ENCODE measurements at regions of chr2 and their contacts with region 1.

Region 1: DNA sequence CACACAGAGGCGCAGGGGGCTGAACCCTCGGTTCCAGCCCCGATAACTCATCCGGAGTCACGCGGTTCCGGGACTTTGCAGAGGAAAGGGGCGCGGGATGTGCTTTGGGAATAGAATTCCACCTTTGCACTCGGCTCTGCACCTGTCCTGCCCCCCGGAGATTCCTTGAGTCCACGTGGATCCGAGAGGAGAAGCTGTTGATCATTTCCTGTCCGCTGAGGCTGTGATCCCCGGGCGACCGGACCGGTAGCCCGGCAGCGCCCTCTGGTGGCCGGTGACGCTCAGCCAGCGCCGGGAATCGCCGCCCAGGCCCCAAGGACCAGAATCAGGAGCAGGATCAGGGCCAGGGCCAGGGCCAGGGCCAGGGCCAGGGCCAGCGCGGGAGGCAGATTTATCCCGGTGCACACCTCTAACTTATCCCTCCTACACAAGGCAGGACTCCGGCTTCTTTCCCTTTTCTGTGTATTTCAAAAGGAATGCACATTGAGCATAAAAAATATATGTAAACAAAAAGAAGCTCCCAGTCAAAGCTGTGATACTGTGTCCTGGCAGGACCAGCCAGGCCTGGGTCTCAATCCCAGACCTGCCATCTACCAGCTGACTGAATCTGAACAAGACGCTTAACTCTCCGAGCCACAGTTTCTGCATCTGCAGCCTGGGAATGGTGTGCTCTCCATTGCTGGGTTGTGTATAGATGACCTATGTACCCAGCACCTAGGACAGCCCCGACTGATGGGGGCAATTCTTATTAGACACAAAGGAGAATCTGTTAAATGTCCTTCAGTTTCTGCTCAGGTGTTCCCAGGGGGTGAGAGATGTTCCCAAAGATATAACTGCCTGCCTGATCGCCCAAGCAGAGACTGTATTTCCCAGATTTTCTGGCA is 8.5 kb upstream of the SPATA3 start:
- DNase-seq: peak; percentile 82
- ATAC-seq: peak; percentile 72
- H3K4me3 Mint-ChIP-seq: peak overlapping the region; percentile 67
- H3K27ac Mint-ChIP-seq: peak overlapping the region; percentile 61
- H3K4me1 Mint-ChIP-seq: peaks cover 47% of the 10 kb centered on the region
- H3K27me3 Mint-ChIP-seq: peaks cover 17% of the 10 kb centered on the region

Region 2: DNA sequence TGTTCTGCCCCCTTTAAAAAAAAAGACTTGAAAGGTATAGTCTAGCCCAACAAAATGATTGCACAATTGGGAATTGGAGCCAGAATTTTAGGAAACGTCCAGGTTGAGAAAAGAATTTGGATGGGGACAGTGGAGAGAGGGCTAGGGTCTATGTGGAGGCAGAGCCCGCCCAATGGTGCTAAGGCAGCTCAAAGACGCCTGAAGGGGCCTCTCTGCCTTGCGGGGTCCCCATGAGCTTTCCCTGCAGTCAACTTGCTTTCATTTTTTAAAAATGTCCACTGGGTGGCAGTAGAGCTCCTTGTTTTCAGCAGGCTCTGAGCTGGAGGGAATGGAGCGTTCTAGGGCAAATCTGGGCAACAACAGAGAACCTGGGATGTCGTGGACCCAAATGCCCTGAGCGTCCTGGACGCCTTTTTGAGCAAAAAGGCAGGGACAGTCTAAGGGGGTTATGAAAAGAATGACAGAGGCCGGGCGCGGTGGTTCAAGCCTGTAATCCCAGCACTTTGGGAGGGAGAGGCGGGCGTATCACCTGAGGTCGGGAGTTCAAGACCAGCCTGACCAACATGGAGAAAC is 162.9 kb before region 1 on chr2:
- CTCF ChIA-PET with region 1: interaction called, 50 read pairs
- POLR2A ChIA-PET with region 1: no interaction called
- DNase-seq: peak; percentile 76
- ATAC-seq: peak; percentile 80
- H3K4me3 Mint-ChIP-seq: peak overlapping the region; percentile 42
- H3K27ac Mint-ChIP-seq: no peak overlapping the region
- H3K4me1 Mint-ChIP-seq: peaks cover 24% of the 10 kb centered on the region
- H3K27me3 Mint-ChIP-seq: peaks cover 27% of the 10 kb centered on the region

Region 3: DNA sequence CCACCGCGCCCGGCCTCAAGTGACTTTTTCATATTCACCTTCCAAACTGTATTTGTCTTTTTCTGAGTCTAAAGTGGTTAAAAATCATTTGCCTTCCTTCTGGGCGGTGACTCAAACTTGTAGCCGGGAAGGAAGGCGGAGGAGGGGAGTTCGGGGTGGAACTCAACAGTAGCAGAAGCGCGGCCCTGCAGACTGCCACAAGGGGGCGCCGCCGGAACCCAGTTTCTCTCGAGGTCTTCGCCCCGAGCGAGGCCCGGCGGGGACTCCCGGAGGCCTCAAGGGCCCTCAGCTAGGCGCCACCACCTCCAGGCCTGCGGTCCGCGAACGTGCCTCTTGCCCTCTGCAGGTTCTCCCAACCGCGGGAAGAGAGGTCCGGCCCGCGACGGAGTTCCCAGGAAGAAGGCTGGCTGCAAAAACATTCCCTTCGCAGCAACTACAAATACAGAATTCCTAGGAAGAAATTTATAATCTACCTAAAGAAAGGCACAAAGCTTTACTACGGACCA is 139.4 kb before region 1 on chr2:
- CTCF ChIA-PET with region 1: interaction called, 30 read pairs
- POLR2A ChIA-PET with region 1: interaction called, 3 read pairs
- DNase-seq: peak; percentile 92
- ATAC-seq: peak; percentile 97
- H3K4me3 Mint-ChIP-seq: no peak overlapping the region
- H3K27ac Mint-ChIP-seq: no peak overlapping the region
- H3K4me1 Mint-ChIP-seq: peaks cover 17% of the 10 kb centered on the region
- H3K27me3 Mint-ChIP-seq: peaks cover 35% of the 10 kb centered on the region

Region 4: GRCh38 chr2:230902180-230902899 is 85.0 kb before region 1 on chr2:
- CTCF ChIA-PET with region 1: interaction called, 354 read pairs
- POLR2A ChIA-PET with region 1: interaction called, 6 read pairs
- DNase-seq: peak; percentile 75
- ATAC-seq: peak; percentile 52
- H3K4me3 Mint-ChIP-seq: no peak overlapping the region
- H3K27ac Mint-ChIP-seq: no peak overlapping the region
- H3K4me1 Mint-ChIP-seq: peaks cover 37% of the 10 kb centered on the region
- H3K27me3 Mint-ChIP-seq: no peaks in the 10 kb centered on the region

Region 5: GRCh38 chr2:230924470-230925341 is 62.7 kb before region 1 on chr2 and contains the start of gene GPR55:
- CTCF ChIA-PET with region 1: interaction called, 285 read pairs
- POLR2A ChIA-PET with region 1: interaction called, 43 read pairs
- DNase-seq: peak; percentile 65
- ATAC-seq: peak; percentile 71
- H3K4me3 Mint-ChIP-seq: peak within 1 kb of the TSS; percentile 88
- H3K27ac Mint-ChIP-seq: peak within 1 kb of the TSS; percentile 94
- H3K4me1 Mint-ChIP-seq: peaks cover 81% of the 10 kb centered on the region
- H3K27me3 Mint-ChIP-seq: no peaks in the 10 kb centered on the region
- total RNA-seq, gene GPR55: 12.3 to 12.5 TPM

Region 6: GRCh38 chr2:230968921-230969658 is 18.3 kb before region 1 on chr2:
- CTCF ChIA-PET with region 1: interaction called, 55 read pairs
- POLR2A ChIA-PET with region 1: interaction called, 20 read pairs
- DNase-seq: no peak
- ATAC-seq: no peak
- H3K4me3 Mint-ChIP-seq: peak overlapping the region; percentile 0
- H3K27ac Mint-ChIP-seq: peak overlapping the region; percentile 25
- H3K4me1 Mint-ChIP-seq: peaks cover 33% of the 10 kb centered on the region
- H3K27me3 Mint-ChIP-seq: peaks cover 2% of the 10 kb centered on the region

Region 7: GRCh38 chr2:231000211-231000904 is 13.0 kb after region 1 on chr2:
- CTCF ChIA-PET with region 1: interaction called, 10 read pairs
- POLR2A ChIA-PET with region 1: no interaction called
- DNase-seq: no peak
- ATAC-seq: no peak
- H3K4me3 Mint-ChIP-seq: no peak overlapping the region
- H3K27ac Mint-ChIP-seq: no peak overlapping the region
- H3K4me1 Mint-ChIP-seq: no peaks in the 10 kb centered on the region
- H3K27me3 Mint-ChIP-seq: peaks cover 43% of the 10 kb centered on the region

Measured in activated CD8-positive, alpha-beta T cell treated with anti-CD3 and anti-CD28 coated beads, Interleukin-2, amount 10 ng/mL, durations not matched to agents 7 days and 5 days (primary cell).